A673 (cell line): ENCODE measurements at regions of chr1 and their contacts with region 1.

Region 1: GRCh38 chr1:87497380-87498203 is 168.9 kb downstream of the LMO4 start:
- DNase-seq: no peak
- H3K4me3 ChIP-seq: no peak overlapping the region
- H3K27ac ChIP-seq: no peak overlapping the region
- H3K4me1 ChIP-seq: no peaks in the 10 kb centered on the region
- H3K27me3 ChIP-seq: no peaks in the 10 kb centered on the region
- CTCF ChIP-seq: no peak

Region 2: DNA sequence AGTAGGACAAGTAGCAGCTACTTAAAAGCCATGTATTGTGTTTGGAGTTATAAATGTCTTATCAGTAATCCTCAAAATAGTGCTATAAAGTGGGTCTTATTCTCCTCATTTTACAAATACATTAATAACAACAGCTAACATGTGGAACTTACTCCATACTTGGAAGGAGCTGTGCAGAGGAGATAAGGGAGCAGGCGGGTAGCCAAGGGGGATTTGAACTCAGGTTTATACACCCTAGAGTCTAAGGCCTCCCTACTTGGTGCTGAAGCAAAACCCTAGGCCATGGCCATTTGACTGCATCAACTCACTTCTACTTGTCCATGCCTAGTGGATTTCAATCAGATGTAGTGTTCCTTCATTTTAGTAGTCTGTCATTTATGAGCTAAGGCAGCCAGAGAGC is 96.8 kb before region 1 on chr1:
- CTCF ChIA-PET with region 1: no interaction called
- POLR2A ChIA-PET with region 1: interaction called, 10 read pairs
- intact Hi-C with region 1: no loop called
- DNase-seq: no peak
- H3K4me3 ChIP-seq: no peak overlapping the region
- H3K27ac ChIP-seq: no peak overlapping the region
- H3K4me1 ChIP-seq: peaks cover 27% of the 10 kb centered on the region
- H3K27me3 ChIP-seq: no peaks in the 10 kb centered on the region
- CTCF ChIP-seq: no peak

Region 3: GRCh38 chr1:87513255-87513654 is 15.7 kb after region 1 on chr1:
- CTCF ChIA-PET with region 1: no interaction called
- POLR2A ChIA-PET with region 1: no interaction called
- intact Hi-C with region 1: no loop called
- DNase-seq: peak; percentile 67
- H3K4me3 ChIP-seq: no peak overlapping the region
- H3K27ac ChIP-seq: no peak overlapping the region
- H3K4me1 ChIP-seq: peaks cover 5% of the 10 kb centered on the region
- H3K27me3 ChIP-seq: no peaks in the 10 kb centered on the region
- CTCF ChIP-seq: no peak